Heart left ventricle (tissue), 16 donors: ENCODE measurements at regions of chr19 and their contacts with region 1.

Region 1: DNA sequence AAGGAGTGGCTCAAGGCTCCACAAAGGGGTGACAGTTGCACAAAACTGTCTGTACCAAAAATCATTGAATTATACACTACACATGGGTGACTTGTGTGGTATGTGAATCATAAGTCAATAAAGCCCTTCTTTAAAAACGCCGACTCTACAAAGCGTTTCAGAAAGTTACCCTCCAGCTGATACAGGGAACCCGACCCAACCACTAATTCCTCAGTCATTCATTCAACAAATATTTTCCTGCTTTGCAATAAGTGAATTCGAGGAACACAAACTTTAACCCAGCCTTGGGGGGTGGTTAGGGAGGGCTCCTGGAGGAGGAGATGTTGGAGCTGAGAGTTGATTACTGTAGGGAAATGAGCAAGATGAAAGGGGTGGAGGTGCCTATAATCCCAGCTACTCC is 32.0 kb downstream of the LTBP4 start:
- DNase-seq: no peak
- ATAC-seq: no peak
- H3K4me3 ChIP-seq: no peak overlapping the region
- H3K27ac ChIP-seq: no peak overlapping the region
- H3K4me1 ChIP-seq: peaks cover 0 to 19% (median 7%) of the 10 kb centered on the region in 12 donors
- H3K27me3 ChIP-seq: no peaks in the 10 kb centered on the region
- CTCF ChIP-seq: no peak
- POLR2A ChIP-seq: no peak

Region 2: GRCh38 chr19:40542202-40542859 is 90.9 kb before region 1 on chr19:
- intact Hi-C with region 1: loop called in 3 of 10 experiments (anchors 5 to 10 kb)
- DNase-seq: peak; percentile 74 to 92 (median 81)
- ATAC-seq: peak; percentile 42 to 85 (median 82)
- H3K4me3 ChIP-seq: no peak overlapping the region
- H3K27ac ChIP-seq: no peak overlapping the region
- H3K4me1 ChIP-seq: peaks cover 0 to 19% (median 7%) of the 10 kb centered on the region in 12 donors
- H3K27me3 ChIP-seq: no peaks in the 10 kb centered on the region
- CTCF ChIP-seq: peak in 1 of 12 donors; percentile 12
- POLR2A ChIP-seq: no peak

Region 3: DNA sequence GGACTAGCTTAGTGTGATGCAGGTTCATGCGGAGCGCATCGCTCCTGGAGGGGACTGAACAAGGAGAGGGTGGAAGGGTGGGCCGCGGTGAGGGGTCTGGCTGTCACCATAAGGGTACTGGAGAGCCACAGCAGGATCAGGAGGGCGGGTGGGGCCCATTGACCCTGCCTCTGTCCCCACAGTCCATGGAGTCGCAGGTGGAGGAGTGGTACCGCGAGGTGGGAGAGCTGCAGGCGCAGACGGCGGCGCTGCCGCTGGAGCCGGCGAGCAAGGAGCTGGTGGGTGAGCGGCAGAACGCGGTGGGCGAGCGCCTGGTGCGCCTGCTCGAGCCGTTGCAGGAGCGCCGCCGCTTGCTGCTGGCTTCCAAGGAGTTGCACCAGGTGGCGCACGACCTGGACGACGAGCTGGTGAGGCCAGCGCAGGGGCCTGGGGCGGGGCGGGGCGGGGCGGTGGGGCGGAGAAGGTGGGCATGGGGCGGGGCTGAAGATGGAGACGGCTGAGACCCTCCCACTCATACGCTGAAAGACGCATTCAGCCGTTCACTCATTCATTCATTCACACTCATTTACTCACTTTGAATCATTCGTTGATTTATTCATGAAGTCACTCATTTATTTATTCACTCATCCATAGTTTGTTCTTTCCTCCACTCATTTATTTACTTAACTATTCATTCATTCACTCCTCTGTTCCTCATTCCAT is 84.0 kb before region 1 on chr19:
- intact Hi-C with region 1: loop called in 3 of 10 experiments (anchors 5 to 10 kb)
- DNase-seq: peak; percentile 41 to 80 (median 53)
- ATAC-seq: peak in 3 of 4 donors; percentile 60 to 81 (median 71)
- H3K4me3 ChIP-seq: no peak overlapping the region
- H3K27ac ChIP-seq: no peak overlapping the region
- H3K4me1 ChIP-seq: peaks cover 0 to 4% (median 0%) of the 10 kb centered on the region in 12 donors
- H3K27me3 ChIP-seq: peaks cover 0 to 49% (median 8%) of the 10 kb centered on the region in 9 donors
- CTCF ChIP-seq: peak; percentile 15 to 58 (median 38)
- POLR2A ChIP-seq: no peak